ENCODE measurements at regions of chr1 and their contacts with region 1.

Region 1: DNA sequence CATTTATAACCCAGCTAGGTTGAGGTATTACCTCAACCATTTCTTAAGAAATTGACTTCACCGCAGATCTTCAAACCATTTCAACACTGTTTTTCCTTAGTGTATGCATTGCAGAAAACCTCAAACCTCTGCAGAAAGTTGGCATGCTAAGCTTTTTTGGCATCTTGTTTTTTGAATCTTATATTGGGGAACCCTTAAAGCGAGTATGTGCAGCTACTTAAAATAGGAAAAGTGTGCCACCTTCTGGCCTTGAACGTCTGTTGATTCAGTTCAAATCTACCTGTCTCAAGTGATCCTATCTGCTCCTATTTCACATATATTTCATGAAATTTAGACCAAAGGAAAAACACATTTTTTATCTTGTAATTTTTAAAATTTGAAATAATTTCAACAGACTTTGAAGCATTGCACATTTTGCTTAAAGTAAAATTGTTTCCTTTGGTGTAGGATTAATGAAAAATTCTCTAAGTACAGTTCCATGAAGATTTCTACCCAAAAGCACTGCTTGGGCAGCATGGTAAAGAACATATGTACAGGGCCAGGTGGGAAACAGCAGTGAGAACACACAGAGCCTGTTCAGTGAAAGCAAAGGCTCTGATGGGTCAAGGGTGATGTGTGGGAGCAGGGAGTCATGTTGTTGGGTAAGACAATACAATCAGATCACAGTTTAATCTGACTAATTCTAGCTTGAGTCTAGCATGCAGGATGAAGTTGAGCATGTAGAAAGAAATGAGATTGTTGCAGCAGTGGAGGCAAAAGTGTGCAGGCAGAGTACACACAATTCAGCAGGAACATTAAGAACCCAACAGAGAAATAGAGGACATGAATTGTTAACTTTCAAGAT is 17.2 kb downstream of the HENMT1 start:
- DNase-seq: peak; percentile 79
- ATAC-seq: peak; percentile 6
- H3K4me3 Mint-ChIP-seq: no peak overlapping the region
- H3K27ac Mint-ChIP-seq: peak overlapping the region; percentile 44
- H3K4me1 Mint-ChIP-seq: peaks cover 72% of the 10 kb centered on the region
- H3K27me3 Mint-ChIP-seq: no peaks in the 10 kb centered on the region
- CTCF ChIP-seq: peak; percentile 79

Region 2: GRCh38 chr1:108504447-108504846 is 139.3 kb before region 1 on chr1:
- CTCF ChIA-PET with region 1: interaction called, 93 read pairs
- POLR2A ChIA-PET with region 1: interaction called, 3 read pairs
- intact Hi-C with region 1: no loop called
- DNase-seq: peak; percentile 16
- ATAC-seq: peak; percentile 85
- H3K4me3 Mint-ChIP-seq: no peak overlapping the region
- H3K27ac Mint-ChIP-seq: no peak overlapping the region
- H3K4me1 Mint-ChIP-seq: no peaks in the 10 kb centered on the region
- H3K27me3 Mint-ChIP-seq: peaks cover 26% of the 10 kb centered on the region
- CTCF ChIP-seq: no peak

Region 3: GRCh38 chr1:108512239-108512981 is 131.3 kb before region 1 on chr1:
- CTCF ChIA-PET with region 1: interaction called, 93 read pairs
- POLR2A ChIA-PET with region 1: interaction called, 4 read pairs
- intact Hi-C with region 1: loop called (anchors 2 kb)
- DNase-seq: no peak
- ATAC-seq: peak; percentile 64
- H3K4me3 Mint-ChIP-seq: no peak overlapping the region
- H3K27ac Mint-ChIP-seq: no peak overlapping the region
- H3K4me1 Mint-ChIP-seq: no peaks in the 10 kb centered on the region
- H3K27me3 Mint-ChIP-seq: peaks cover 8% of the 10 kb centered on the region
- CTCF ChIP-seq: peak; percentile 93

Region 4: DNA sequence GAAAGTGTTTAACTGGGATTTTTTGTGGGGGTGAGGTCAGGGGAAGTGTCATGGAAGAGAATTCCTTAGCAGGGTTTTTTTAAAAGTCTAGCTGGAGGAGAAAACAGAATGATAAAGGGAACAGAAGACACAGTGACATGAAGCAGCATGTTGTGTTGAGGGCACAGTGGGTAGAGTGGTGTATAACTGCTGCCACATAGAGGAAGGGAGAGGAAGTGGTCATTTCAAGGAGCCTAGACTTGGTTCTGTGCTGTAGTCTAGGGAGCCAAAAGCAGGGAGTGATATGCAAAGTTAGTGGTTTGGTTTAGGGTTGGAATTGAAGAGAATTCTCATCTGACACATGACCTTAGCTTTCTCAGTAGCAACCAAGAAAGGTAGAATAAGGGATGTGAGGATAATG is 73.6 kb before region 1 on chr1:
- CTCF ChIA-PET with region 1: interaction called, 14 read pairs
- POLR2A ChIA-PET with region 1: no interaction called
- intact Hi-C with region 1: no loop called
- DNase-seq: peak; percentile 47
- ATAC-seq: peak; percentile 96
- H3K4me3 Mint-ChIP-seq: no peak overlapping the region
- H3K27ac Mint-ChIP-seq: no peak overlapping the region
- H3K4me1 Mint-ChIP-seq: peaks cover 9% of the 10 kb centered on the region
- H3K27me3 Mint-ChIP-seq: no peaks in the 10 kb centered on the region
- CTCF ChIP-seq: peak; percentile 62

Region 5: GRCh38 chr1:108584348-108584856 is 59.3 kb before region 1 on chr1:
- CTCF ChIA-PET with region 1: interaction called, 8 read pairs
- POLR2A ChIA-PET with region 1: no interaction called
- intact Hi-C with region 1: loop called (anchors 5 kb)
- DNase-seq: no peak
- ATAC-seq: peak; percentile 34
- H3K4me3 Mint-ChIP-seq: no peak overlapping the region
- H3K27ac Mint-ChIP-seq: peak overlapping the region; percentile 44
- H3K4me1 Mint-ChIP-seq: peaks cover 49% of the 10 kb centered on the region
- H3K27me3 Mint-ChIP-seq: no peaks in the 10 kb centered on the region
- CTCF ChIP-seq: no peak

Region 6: DNA sequence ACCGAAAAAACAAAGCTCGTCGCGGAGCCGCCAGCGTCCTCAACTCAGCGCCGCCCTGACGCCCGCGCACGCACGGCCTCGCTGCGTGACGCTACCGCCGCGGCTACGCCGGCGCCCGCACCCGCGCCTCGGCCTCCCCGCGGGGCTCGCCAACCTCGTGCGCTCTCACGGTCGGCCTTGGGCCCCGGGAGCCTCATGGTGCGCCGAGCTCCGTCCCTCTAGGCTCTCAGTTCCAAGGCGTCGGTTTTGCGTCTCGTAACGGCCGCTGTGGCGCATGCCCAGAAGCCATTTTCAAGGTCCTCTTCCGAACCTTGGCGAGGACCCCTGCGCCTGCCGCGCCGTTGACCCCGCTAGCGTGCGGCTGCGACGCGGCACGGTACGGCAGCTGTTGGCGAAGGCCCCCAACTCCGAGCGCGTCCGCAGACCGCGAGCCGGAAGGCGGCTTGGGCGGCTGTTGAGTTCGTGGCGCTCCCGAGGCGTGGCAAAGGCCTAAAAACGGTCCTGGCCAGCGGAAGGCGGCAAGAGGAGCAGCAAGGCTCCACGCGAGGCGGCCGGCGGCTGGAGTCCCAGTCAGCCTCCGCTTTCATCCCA is 17.4 kb after region 1 on chr1 and contains the start of gene HENMT1:
- CTCF ChIA-PET with region 1: interaction called, 14 read pairs
- POLR2A ChIA-PET with region 1: interaction called, 58 read pairs
- intact Hi-C with region 1: no loop called
- DNase-seq: peak; percentile 83
- ATAC-seq: peak; percentile 80
- H3K4me3 Mint-ChIP-seq: peak within 1 kb of the TSS; percentile 82
- H3K27ac Mint-ChIP-seq: peak within 1 kb of the TSS; percentile 96
- H3K4me1 Mint-ChIP-seq: peaks cover 40% of the 10 kb centered on the region
- H3K27me3 Mint-ChIP-seq: no peaks in the 10 kb centered on the region
- CTCF ChIP-seq: no peak
- total RNA-seq, gene HENMT1: 25.3 to 27.1 TPM

Region 7: GRCh38 chr1:108691942-108692723 is 48.4 kb after region 1 on chr1 and contains the start of gene PRPF38B:
- CTCF ChIA-PET with region 1: interaction called, 19 read pairs
- POLR2A ChIA-PET with region 1: interaction called, 44 read pairs
- intact Hi-C with region 1: loop called (anchors 5 kb)
- DNase-seq: peak; percentile 96
- ATAC-seq: peak; percentile 89
- H3K4me3 Mint-ChIP-seq: peak within 1 kb of the TSS; percentile 97
- H3K27ac Mint-ChIP-seq: peak within 1 kb of the TSS; percentile 97
- H3K4me1 Mint-ChIP-seq: peaks cover 31% of the 10 kb centered on the region
- H3K27me3 Mint-ChIP-seq: no peaks in the 10 kb centered on the region
- CTCF ChIP-seq: no peak
- total RNA-seq, gene PRPF38B: 62.5 to 65.3 TPM

Region 8: DNA sequence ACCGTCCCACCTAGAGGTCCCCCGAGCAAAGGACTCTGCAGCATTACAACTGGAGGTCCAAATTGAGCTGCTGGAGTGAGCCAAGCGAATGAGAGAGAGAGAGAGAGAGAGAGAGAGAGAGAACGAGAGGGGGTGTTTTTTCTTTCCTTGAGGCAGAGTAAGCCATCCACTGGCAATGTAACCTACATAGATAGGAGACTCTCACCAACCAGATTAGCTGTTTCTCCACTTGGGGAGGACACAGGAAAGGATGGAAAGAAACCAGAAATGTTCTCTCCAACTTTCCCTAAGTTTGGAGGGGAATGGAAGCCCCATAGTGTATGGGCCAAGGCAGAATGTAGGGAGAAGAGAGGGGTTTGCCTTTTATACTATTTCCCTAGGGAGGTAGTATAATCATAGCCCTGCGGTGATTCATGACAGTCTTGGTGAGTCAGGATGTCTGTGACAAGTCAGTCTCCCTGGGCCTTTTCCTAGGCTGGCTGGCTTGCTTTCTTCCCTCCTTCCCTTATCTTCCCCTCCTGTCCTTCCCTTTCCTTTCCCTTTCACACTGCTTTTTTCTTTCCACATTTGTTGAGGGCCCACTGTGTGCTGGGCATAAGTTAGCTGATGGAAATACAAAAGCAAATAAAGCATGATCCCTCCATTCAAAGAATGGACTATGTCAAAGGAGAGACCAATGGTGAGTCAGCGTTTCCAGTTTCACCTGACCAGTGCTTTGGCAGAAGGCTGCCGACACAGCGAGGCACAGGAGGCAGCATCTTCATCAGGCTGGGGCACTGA is 76.1 kb after region 1 on chr1:
- CTCF ChIA-PET with region 1: no interaction called
- POLR2A ChIA-PET with region 1: no interaction called
- intact Hi-C with region 1: no loop called
- DNase-seq: no peak
- ATAC-seq: no peak
- H3K4me3 Mint-ChIP-seq: no peak overlapping the region
- H3K27ac Mint-ChIP-seq: no peak overlapping the region
- H3K4me1 Mint-ChIP-seq: no peaks in the 10 kb centered on the region
- H3K27me3 Mint-ChIP-seq: no peaks in the 10 kb centered on the region
- CTCF ChIP-seq: no peak

Measured in activated CD8-positive, alpha-beta T cell treated with anti-CD3 and anti-CD28 coated beads for 36 hours (primary cell).